WTC11 (cell line): ENCODE measurements at regions of chr20 and their contacts with region 1.

Region 1: DNA sequence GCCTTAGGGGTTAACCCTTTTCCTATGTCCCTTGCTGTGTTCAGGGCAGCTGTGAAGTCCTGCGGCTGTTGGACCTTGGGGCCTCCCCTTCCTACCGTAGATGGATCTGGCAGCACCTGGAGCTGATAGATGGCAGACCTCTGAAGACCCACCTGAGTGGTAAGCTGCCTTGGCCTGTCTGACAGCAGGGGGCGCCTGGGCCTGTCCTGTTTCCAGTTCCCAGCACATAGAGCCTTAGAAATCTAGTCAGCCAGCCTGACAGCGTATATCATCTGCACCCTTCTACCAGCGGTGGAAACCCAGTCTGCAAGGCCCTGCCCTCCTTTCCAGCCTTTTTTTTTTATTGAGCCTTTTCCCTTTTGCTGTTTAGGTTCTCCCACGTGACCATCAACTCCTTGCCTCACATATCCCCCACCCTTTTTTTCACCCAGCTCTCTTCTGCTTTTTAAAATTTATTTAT is 26.6 kb downstream of the CNBD2 start:
- DNase-seq: peak; percentile 94
- ATAC-seq: peak; percentile 97
- H3K4me3 Mint-ChIP-seq: no peak overlapping the region
- H3K27ac Mint-ChIP-seq: no peak overlapping the region
- H3K4me1 Mint-ChIP-seq: peaks cover 10% of the 10 kb centered on the region
- H3K27me3 Mint-ChIP-seq: no peaks in the 10 kb centered on the region
- CTCF ChIP-seq: peak; percentile 71

Region 2: GRCh38 chr20:35929286-35929685 is 65.7 kb before region 1 on chr20:
- CTCF ChIA-PET with region 1: no interaction called
- POLR2A ChIA-PET with region 1: no interaction called
- DNase-seq: no peak
- ATAC-seq: no peak
- H3K4me3 Mint-ChIP-seq: no peak overlapping the region
- H3K27ac Mint-ChIP-seq: no peak overlapping the region
- H3K4me1 Mint-ChIP-seq: peaks cover 8% of the 10 kb centered on the region
- H3K27me3 Mint-ChIP-seq: no peaks in the 10 kb centered on the region
- CTCF ChIP-seq: no peak

Region 3: GRCh38 chr20:35954200-35954906 is 40.7 kb before region 1 on chr20 and contains the start of gene SCAND1:
- CTCF ChIA-PET with region 1: interaction called, 103 read pairs
- POLR2A ChIA-PET with region 1: interaction called, 14 read pairs
- DNase-seq: peak; percentile 96
- ATAC-seq: peak; percentile 96
- H3K4me3 Mint-ChIP-seq: peak within 1 kb of the TSS; percentile 98
- H3K27ac Mint-ChIP-seq: peak within 1 kb of the TSS; percentile 99
- H3K4me1 Mint-ChIP-seq: peaks cover 10% of the 10 kb centered on the region
- H3K27me3 Mint-ChIP-seq: peaks cover 3% of the 10 kb centered on the region
- CTCF ChIP-seq: peak; percentile 45
- total RNA-seq, gene SCAND1: 94.2 to 103 TPM (median 94.6 TPM) in 3 replicates

Region 4: DNA sequence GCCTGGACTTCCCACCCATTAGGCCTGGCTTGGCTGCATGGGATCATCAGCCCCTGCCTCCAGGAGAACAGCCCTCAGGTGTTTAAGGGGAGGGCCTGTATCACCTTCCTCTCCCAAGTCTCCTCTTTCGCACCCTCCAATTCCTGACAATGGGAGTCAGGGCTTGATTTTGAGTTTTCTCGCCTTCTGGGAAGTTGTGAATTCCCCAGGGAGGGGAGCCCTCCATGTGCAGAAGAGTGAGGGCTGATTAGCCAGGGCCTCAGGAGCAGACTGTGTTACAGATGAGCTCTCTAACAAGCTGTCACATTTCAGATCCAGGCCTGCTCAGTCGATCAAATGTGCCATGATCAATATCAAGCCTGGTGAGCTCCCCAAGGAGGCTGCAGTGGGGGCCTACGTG is 15.8 kb after region 1 on chr20:
- CTCF ChIA-PET with region 1: interaction called, 51 read pairs
- POLR2A ChIA-PET with region 1: no interaction called
- DNase-seq: no peak
- ATAC-seq: peak; percentile 22; the same call in 1 of the 2 replicates
- H3K4me3 Mint-ChIP-seq: no peak overlapping the region
- H3K27ac Mint-ChIP-seq: no peak overlapping the region
- H3K4me1 Mint-ChIP-seq: no peaks in the 10 kb centered on the region
- H3K27me3 Mint-ChIP-seq: no peaks in the 10 kb centered on the region
- CTCF ChIP-seq: no peak

Region 5: GRCh38 chr20:36050436-36051317 is 55.7 kb after region 1 on chr20:
- CTCF ChIA-PET with region 1: interaction called, 17 read pairs
- POLR2A ChIA-PET with region 1: no interaction called
- DNase-seq: peak; percentile 94
- ATAC-seq: peak; percentile 93
- H3K4me3 Mint-ChIP-seq: peak overlapping the region; percentile 94
- H3K27ac Mint-ChIP-seq: peak overlapping the region; percentile 76
- H3K4me1 Mint-ChIP-seq: peaks cover 41% of the 10 kb centered on the region
- H3K27me3 Mint-ChIP-seq: no peaks in the 10 kb centered on the region; the same call in 1 of the 2 replicates
- CTCF ChIP-seq: no peak

Region 6: GRCh38 chr20:36093025-36093803 is 98.2 kb after region 1 on chr20:
- CTCF ChIA-PET with region 1: interaction called, 25 read pairs
- POLR2A ChIA-PET with region 1: no interaction called
- DNase-seq: no peak
- ATAC-seq: no peak
- H3K4me3 Mint-ChIP-seq: peak overlapping the region; percentile 85
- H3K27ac Mint-ChIP-seq: no peak overlapping the region
- H3K4me1 Mint-ChIP-seq: peaks cover 47% of the 10 kb centered on the region
- H3K27me3 Mint-ChIP-seq: peaks cover 92% of the 10 kb centered on the region
- CTCF ChIP-seq: no peak

Region 7: GRCh38 chr20:36121981-36122930 is 127.2 kb after region 1 on chr20:
- CTCF ChIA-PET with region 1: interaction called, 13 read pairs
- POLR2A ChIA-PET with region 1: interaction called, 3 read pairs
- DNase-seq: no peak
- ATAC-seq: peak; percentile 86
- H3K4me3 Mint-ChIP-seq: no peak overlapping the region
- H3K27ac Mint-ChIP-seq: no peak overlapping the region
- H3K4me1 Mint-ChIP-seq: peaks cover 7% of the 10 kb centered on the region; the same call in 1 of the 2 replicates
- H3K27me3 Mint-ChIP-seq: peaks cover 4% of the 10 kb centered on the region; the same call in 1 of the 2 replicates
- CTCF ChIP-seq: no peak

Region 8: GRCh38 chr20:36154700-36155628 is 159.9 kb after region 1 on chr20 and contains the start of gene EPB41L1:
- CTCF ChIA-PET with region 1: interaction called, 29 read pairs
- POLR2A ChIA-PET with region 1: no interaction called
- DNase-seq: peak; percentile 57
- ATAC-seq: peak; percentile 49
- H3K4me3 Mint-ChIP-seq: peak within 1 kb of the TSS; percentile 78
- H3K27ac Mint-ChIP-seq: no peak within 1 kb of the TSS
- H3K4me1 Mint-ChIP-seq: peaks cover 23% of the 10 kb centered on the region
- H3K27me3 Mint-ChIP-seq: peaks cover 21% of the 10 kb centered on the region
- CTCF ChIP-seq: no peak
- total RNA-seq, gene EPB41L1: 37.7 to 38.7 TPM (median 38.1 TPM) in 3 replicates